Gastrocnemius medialis (tissue), 4 donors: ENCODE measurements at regions of chr2 and their contacts with region 1.

Region 1: DNA sequence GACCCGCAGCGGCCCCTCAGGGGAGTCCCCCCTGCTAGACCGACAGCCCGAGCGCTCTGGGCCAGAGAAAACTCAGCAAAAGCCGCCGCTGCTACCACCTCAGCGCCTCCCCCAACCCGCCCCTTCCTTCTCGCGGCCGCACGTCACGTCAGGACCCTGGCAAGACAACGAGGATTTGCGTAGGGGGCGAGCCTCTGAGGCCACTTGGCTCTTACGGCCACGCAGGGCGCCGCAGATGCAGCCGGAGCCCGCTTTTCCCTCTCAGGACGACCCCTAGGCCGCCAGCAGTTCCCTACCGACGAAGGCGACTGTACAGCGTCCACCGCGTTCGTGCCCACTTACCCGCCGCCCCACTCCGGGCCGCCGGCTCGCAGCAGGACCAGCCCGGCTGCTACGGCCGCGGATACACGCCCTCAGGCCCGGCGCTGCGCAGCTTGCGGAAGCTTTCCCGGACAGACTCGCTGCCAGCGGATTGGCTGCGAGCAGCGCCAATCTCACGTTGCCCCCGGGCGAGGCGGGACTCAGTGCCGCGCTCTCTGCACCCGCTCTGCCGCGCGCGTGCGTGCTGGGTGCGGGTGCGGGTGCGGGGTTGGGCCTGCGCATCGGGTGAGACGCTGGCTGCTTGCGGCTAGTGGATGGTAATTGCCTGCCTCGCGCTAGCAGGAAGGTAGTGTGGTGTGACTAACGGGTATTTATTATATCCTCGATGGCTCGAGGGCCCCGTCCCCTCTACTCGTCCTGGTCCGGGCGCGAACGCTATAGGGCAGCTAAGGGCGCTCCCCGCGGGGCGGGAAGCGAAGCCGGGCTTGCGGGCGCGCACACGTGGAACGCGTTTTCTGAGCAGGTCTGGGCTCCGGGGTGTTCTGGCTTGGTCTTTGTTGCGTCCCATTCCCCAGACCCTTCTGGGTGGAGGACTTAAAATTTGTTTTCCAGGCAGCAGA is at the starts of genes ORMDL1 and PMS1:
- DNase-seq: peak; percentile 92 to 94
- ATAC-seq: peak; percentile 92 to 93
- H3K4me3 ChIP-seq: peak within 1 kb of the TSS; percentile 74 to 89 (median 81)
- H3K27ac ChIP-seq: peak within 1 kb of the TSS; percentile 88 to 96 (median 94)
- H3K4me1 ChIP-seq: peaks cover 25 to 33% of the 10 kb centered on the region in 2 donors
- H3K27me3 ChIP-seq: no peaks in the 10 kb centered on the region
- CTCF ChIP-seq: no peak
- POLR2A ChIP-seq: peak; percentile 92 to 94
- total RNA-seq, gene ORMDL1: 13.3 to 38.9 (median 23.7) TPM
- total RNA-seq, gene PMS1: 6.9 to 12.0 (median 8.8) TPM

Region 2: DNA sequence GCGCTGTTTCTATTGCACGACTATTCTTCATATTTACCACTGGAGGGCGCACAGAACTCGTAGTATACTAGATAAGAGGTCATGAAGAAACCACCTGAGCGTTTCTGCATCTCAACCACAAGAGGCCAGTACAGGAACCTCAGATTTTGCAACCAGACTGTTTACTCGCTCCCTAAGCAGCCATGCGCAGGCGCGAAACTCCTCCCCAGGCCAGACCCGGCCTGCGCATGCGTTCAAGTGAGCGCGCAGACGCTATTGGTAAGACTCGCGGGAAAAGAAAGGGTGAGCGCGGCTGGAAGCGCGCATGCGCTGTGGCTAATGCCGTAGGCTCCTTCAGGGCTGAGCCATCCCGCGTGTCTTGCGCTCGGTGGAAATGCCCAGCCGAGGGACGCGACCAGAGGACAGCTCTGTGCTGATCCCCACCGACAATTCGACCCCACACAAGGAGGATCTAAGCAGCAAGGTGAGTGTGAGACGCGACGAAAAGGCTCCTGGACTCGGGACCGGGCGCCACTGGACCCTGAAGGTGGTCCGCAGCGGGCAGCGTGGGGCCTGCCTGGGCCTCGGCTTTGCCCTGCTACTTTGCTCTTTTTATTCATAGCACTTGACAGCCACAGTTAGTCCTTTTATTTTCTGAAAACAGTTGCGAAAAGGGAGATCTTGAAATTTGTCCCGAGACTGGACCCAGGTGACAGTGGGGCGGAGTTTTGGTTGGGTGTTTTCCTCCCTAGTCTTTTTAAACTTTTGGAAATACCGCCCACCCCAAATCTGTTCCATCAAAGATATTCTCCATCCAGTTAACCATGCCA is 122.8 kb before region 1 on chr2 and contains the start of gene ASNSD1:
- in situ Hi-C with region 1: no loop called
- intact Hi-C with region 1: loop called (anchors 5 kb)
- DNase-seq: peak; percentile 98 to 99
- ATAC-seq: peak; percentile 100
- H3K4me3 ChIP-seq: peak within 1 kb of the TSS; percentile 77 to 98 (median 92)
- H3K27ac ChIP-seq: peak within 1 kb of the TSS; percentile 93 to 99 (median 96)
- H3K4me1 ChIP-seq: peaks cover 23 to 28% of the 10 kb centered on the region in 2 donors
- H3K27me3 ChIP-seq: no peaks in the 10 kb centered on the region
- CTCF ChIP-seq: peak; percentile 91 to 100 (median 96)
- POLR2A ChIP-seq: peak; percentile 85 to 91
- total RNA-seq, gene ASNSD1: 68.1 to 114 (median 87.3) TPM

Region 3: DNA sequence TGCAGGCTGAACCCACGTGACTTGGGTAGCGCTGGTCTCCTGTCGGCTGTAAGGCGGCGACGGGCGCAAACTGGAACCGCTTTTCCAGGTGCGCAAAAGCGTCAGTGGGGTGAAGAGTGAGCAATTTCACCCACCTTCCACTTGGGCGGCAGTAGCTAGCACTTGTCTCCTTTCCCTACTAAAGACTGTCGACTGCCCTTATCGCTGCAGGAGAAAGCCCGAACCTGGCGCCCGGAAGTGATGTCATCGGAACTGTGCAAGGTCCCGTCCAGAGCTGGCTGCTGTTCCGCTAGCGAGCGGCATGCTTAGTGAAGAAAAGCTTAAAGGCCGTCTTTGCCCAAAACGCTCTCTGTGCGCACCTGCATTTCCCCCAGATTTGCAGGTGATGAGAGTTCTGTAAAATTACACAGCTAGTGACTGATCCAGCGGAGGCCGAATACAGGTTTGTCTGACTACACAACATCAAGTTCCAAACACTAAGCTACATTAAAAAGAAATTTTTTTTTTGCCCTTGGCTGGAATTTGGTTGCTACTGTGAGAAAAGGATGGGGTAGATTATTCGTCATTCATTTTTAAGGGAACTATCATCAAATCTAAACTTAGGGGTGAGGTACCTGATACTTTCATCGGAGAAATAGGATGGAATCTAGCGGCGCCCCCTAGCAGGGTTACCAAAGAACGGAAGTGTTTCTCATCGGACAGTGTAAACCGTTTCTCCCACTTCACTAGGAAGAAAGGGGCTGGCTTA is 21.5 kb before region 1 on chr2 and contains the start of gene OSGEPL1:
- in situ Hi-C with region 1: no loop called
- intact Hi-C with region 1: loop called (anchors 1 kb)
- DNase-seq: peak; percentile 87 to 89
- ATAC-seq: peak; percentile 98
- H3K4me3 ChIP-seq: peak within 1 kb of the TSS; percentile 59 to 89 (median 66)
- H3K27ac ChIP-seq: peak within 1 kb of the TSS; percentile 81 to 89 (median 86)
- H3K4me1 ChIP-seq: peaks cover 16 to 23% of the 10 kb centered on the region in 2 donors
- H3K27me3 ChIP-seq: no peaks in the 10 kb centered on the region
- CTCF ChIP-seq: peak in 4 of 5 experiments; percentile 13 to 52 (median 32)
- POLR2A ChIP-seq: peak in 1 of 2 donors; percentile 8
- total RNA-seq, gene OSGEPL1: 2.1 to 15.6 (median 6.5) TPM

Region 4: GRCh38 chr2:189913821-189914220 is 129.6 kb after region 1 on chr2:
- in situ Hi-C with region 1: no loop called
- intact Hi-C with region 1: no loop called
- DNase-seq: no peak
- ATAC-seq: no peak
- H3K4me3 ChIP-seq: no peak overlapping the region
- H3K27ac ChIP-seq: no peak overlapping the region
- H3K4me1 ChIP-seq: no peaks in the 10 kb centered on the region
- H3K27me3 ChIP-seq: no peaks in the 10 kb centered on the region
- CTCF ChIP-seq: no peak
- POLR2A ChIP-seq: no peak

Region 5: DNA sequence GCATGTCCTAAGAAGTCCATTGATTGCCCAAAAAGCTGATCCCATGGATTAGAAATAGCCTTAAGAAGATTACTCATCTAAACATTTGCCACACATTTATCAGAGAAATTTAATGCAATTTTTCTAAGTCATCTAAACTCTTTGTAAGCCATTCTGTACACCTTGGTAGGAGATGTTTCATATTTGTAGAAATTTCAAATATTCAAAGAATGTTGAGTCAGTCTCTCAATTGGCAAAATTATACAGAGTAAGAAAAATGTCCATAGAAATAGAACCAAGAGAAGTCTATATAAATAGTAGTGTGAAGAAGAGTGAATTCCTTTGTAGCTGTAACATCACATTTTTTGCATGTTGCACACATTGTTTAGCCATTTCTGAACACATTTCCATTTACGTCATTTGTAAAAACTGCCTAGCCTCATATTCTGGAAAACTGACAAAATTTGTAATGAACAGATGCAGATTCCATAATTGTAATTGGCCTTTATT is 149.8 kb after region 1 on chr2:
- in situ Hi-C with region 1: no loop called
- intact Hi-C with region 1: no loop called
- DNase-seq: no peak
- ATAC-seq: no peak
- H3K4me3 ChIP-seq: no peak overlapping the region
- H3K27ac ChIP-seq: no peak overlapping the region
- H3K4me1 ChIP-seq: no peaks in the 10 kb centered on the region
- H3K27me3 ChIP-seq: no peaks in the 10 kb centered on the region
- CTCF ChIP-seq: no peak
- POLR2A ChIP-seq: no peak

Region 6: GRCh38 chr2:190069936-190070696 is 285.9 kb after region 1 on chr2:
- in situ Hi-C with region 1: loop called in 1 of 4 experiments (anchors 25 kb)
- intact Hi-C with region 1: no loop called
- DNase-seq: no peak
- ATAC-seq: peak; percentile 69 to 90
- H3K4me3 ChIP-seq: no peak overlapping the region
- H3K27ac ChIP-seq: no peak overlapping the region
- H3K4me1 ChIP-seq: peaks cover 0 to 6% of the 10 kb centered on the region in 2 donors
- H3K27me3 ChIP-seq: no peaks in the 10 kb centered on the region
- CTCF ChIP-seq: peak in 4 of 5 experiments; percentile 55 to 67 (median 61)
- POLR2A ChIP-seq: no peak

Region 7: GRCh38 chr2:190648289-190649034 is 864.3 kb after region 1 on chr2:
- in situ Hi-C with region 1: no loop called
- intact Hi-C with region 1: loop called (anchors 5 kb)
- DNase-seq: peak; percentile 70 to 76
- ATAC-seq: peak; percentile 78 to 80
- H3K4me3 ChIP-seq: peak overlapping the region; percentile 69 to 87 (median 82)
- H3K27ac ChIP-seq: peak overlapping the region; percentile 73 to 87 (median 82)
- H3K4me1 ChIP-seq: peaks cover 20 to 28% of the 10 kb centered on the region in 2 donors
- H3K27me3 ChIP-seq: no peaks in the 10 kb centered on the region
- CTCF ChIP-seq: no peak
- POLR2A ChIP-seq: peak; percentile 58 to 66

Region 8: DNA sequence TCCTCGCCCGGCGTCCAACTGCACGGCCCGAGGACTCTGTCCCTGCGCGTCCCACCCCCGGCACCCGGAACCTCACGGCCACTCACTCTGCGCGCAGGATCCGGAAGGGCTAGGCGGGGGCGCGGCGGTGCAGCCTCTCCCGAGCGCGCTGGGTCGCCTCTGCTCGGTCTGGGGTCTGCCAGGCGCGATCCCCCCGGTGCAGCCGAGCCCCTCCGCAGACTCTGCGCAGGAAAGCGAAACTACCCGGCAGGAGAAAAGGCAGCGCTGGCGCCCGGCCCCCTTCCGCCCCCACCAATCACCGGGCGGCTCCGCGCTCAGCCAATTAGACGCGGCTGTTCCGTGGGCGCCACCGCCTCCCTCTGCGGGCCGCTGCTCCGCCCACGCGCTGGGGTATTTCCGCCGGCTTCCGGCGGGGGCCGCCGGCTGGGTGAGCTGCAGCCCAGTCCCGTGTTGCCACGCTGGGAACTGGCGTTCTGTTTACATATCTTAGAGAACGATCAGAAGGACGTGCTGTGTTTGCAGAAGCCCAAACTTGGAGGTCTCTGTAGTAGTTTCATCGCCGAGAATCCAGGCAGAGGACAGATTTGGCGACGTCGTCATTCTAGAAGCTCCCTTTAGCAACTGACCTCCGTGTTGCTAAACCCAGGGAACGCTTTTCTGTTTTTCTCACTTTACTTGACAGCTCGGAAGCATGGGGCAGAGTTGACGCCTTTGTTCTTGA is 1229.9 kb after region 1 on chr2 and contains the start of gene STAT1:
- in situ Hi-C with region 1: no loop called
- intact Hi-C with region 1: no loop called
- DNase-seq: peak; percentile 83 to 88
- ATAC-seq: peak; percentile 92 to 96
- H3K4me3 ChIP-seq: peak within 1 kb of the TSS; percentile 82 to 98 (median 90)
- H3K27ac ChIP-seq: peak within 1 kb of the TSS; percentile 89 to 98 (median 95)
- H3K4me1 ChIP-seq: peaks cover 13 to 25% of the 10 kb centered on the region in 2 donors
- H3K27me3 ChIP-seq: no peaks in the 10 kb centered on the region
- CTCF ChIP-seq: peak in 4 of 5 experiments; percentile 18 to 28 (median 20)
- POLR2A ChIP-seq: peak; percentile 89 to 90
- total RNA-seq, gene STAT1: 23.0 to 36.9 (median 28.6) TPM